ENCODE measurements at regions of chr2 and their contacts with region 1.

Region 1: DNA sequence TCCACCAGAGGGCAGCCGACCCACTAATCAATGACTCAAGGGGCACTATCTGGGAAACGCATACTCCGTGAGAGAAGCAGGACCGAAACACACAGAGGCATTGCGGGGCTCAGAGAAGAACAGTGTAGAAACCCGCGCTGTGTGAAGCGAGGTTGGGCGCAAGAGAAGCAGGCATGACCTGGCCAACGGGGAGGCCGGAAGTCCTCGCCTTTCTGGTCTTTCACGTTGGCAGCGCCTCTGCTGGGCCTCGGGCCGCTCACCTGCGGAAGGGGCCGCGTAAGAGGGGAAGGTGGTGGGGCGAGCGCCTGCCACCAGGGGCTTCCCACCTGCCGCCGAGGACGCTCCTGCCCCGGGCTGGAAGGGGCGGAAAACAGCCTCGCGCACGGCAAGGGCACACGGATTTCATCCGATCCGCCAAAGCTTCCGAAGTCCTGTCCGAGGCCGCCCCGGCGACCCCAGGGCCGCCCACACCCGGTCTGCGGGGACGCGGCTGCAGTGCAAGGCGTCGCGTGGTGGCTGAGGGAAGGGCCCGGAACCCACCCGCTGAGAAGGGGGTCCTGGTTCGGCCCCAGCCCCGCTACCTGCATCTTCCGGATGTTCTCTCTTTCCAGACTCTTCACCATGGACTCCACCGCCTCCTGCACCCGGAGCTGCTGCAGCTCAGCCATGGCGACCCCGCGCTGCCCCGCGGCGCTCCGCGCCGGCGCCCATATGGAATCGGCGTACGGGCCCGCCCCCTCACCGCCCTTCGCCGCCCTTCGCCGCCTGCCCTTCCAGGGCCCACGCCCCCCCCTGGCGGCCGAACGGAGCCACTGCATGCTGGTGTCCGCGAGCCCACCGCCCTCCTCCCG is at the start of gene FAM136A:
- DNase-seq: peak; percentile 96
- H3K4me3 ChIP-seq: peak within 1 kb of the TSS; percentile 82 to 97
- H3K27ac ChIP-seq: peak within 1 kb of the TSS; percentile 53 to 85
- H3K4me1 ChIP-seq: peaks cover 6 to 9% of the 10 kb centered on the region in 2 experiments; a peak in 1 of 4 replicates
- H3K27me3 ChIP-seq: no peaks in the 10 kb centered on the region
- CTCF ChIP-seq: peak; percentile 80
- EP300 ChIP-seq: 0 out of 4 replicates have a peak, but pooled peaks of 1 of the 2 experiments have one; percentile 30
- RAD21 ChIP-seq: peak; percentile 46; the same call in 1 of the 2 replicates
- polyA plus RNA-seq, gene FAM136A: 43.3 and 50.6 TPM in 2 replicates

Region 2: GRCh38 chr2:70258532-70258874 is 43.1 kb before region 1 on chr2:
- CTCF ChIA-PET with region 1: interaction called, 3 read pairs
- POLR2A ChIA-PET with region 1: interaction called, 10 read pairs
- DNase-seq: peak; percentile 56
- H3K4me3 ChIP-seq: peak overlapping the region; percentile 69 to 79
- H3K27ac ChIP-seq: peak overlapping the region; percentile 7 to 84; a peak in 3 of 4 replicates
- H3K4me1 ChIP-seq: peaks cover 0 to 8% of the 10 kb centered on the region in 2 experiments; a peak in 2 of 4 replicates
- H3K27me3 ChIP-seq: no peaks in the 10 kb centered on the region
- CTCF ChIP-seq: no peak
- EP300 ChIP-seq: no peak
- RAD21 ChIP-seq: no peak

Region 3: GRCh38 chr2:70340921-70341765 is 39.6 kb after region 1 on chr2:
- CTCF ChIA-PET with region 1: interaction called, 74 read pairs
- POLR2A ChIA-PET with region 1: no interaction called
- DNase-seq: peak; percentile 76
- H3K4me3 ChIP-seq: no peak overlapping the region; a peak in 1 of 4 replicates
- H3K27ac ChIP-seq: no peak overlapping the region
- H3K4me1 ChIP-seq: no peaks in the 10 kb centered on the region
- H3K27me3 ChIP-seq: peaks cover 13% of the 10 kb centered on the region; the same call in 1 of the 2 replicates
- CTCF ChIP-seq: peak; percentile 81
- EP300 ChIP-seq: no peak
- RAD21 ChIP-seq: peak; percentile 93

Region 4: GRCh38 chr2:70641263-70641784 is 339.8 kb after region 1 on chr2:
- CTCF ChIA-PET with region 1: interaction called, 111 read pairs
- POLR2A ChIA-PET with region 1: no interaction called
- DNase-seq: no peak
- H3K4me3 ChIP-seq: no peak overlapping the region
- H3K27ac ChIP-seq: no peak overlapping the region
- H3K4me1 ChIP-seq: no peaks in the 10 kb centered on the region
- H3K27me3 ChIP-seq: no peaks in the 10 kb centered on the region
- CTCF ChIP-seq: no peak
- EP300 ChIP-seq: no peak
- RAD21 ChIP-seq: no peak

Region 5: GRCh38 chr2:70767699-70768589 is 466.4 kb after region 1 on chr2 and contains the start of gene ADD2:
- CTCF ChIA-PET with region 1: interaction called, 25 read pairs
- POLR2A ChIA-PET with region 1: no interaction called
- DNase-seq: peak; percentile 93
- H3K4me3 ChIP-seq: peak within 1 kb of the TSS; percentile 50 to 52
- H3K27ac ChIP-seq: peak within 1 kb of the TSS in 1 of 2 experiments; percentile 73; a peak in 2 of 4 replicates
- H3K4me1 ChIP-seq: peaks cover 0 to 10% of the 10 kb centered on the region in 2 experiments; a peak in 2 of 4 replicates
- H3K27me3 ChIP-seq: peaks cover 25% of the 10 kb centered on the region
- CTCF ChIP-seq: peak; percentile 38
- EP300 ChIP-seq: no peak
- RAD21 ChIP-seq: no peak
- polyA plus RNA-seq, gene ADD2: 0.30 and 0.50 TPM in 2 replicates

Region 6: DNA sequence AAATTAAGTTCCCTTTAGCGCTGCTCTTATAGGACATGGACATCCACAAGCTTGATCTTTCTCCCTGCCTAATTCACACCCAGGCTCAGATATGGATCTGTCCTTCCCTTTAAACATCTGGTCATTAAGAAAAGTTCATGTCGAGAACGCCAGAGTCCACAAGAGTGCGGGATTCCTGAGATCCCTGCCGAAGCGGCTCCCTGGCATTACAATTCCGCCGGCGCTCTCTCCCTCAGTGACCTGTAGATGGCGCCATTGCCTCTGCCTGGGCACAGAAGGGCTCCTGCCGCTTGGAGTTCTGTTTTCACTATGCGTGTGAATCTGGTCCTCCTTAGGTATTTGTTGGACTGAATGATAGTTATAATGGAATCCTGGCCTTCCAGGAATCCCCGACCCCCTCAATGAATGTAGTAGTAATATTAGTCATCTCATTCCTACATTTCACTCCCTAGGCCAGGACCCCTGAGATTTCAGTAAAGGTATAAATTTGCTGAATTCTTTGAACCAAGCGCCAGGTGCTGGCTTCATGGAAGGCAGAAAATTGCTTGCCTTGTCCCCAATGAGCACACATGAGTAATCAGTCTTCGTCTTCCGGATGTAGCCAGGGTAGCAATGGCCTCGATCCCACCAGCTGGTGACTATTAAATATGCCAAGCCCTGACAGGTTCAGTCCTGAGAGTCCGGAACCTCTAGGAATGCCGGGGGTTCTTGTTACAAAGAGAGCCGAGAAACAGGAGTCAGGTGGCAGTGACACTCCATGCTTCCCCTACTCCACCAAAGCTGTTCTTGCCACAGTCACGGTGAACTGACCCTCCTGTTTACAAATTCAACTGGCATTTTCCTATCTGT is 560.4 kb after region 1 on chr2:
- CTCF ChIA-PET with region 1: interaction called, 13 read pairs
- POLR2A ChIA-PET with region 1: no interaction called
- DNase-seq: peak; percentile 85
- H3K4me3 ChIP-seq: peak overlapping the region in 1 of 2 experiments; percentile 30; a peak in 1 of 4 replicates
- H3K27ac ChIP-seq: no peak overlapping the region
- H3K4me1 ChIP-seq: peaks cover 0 to 3% of the 10 kb centered on the region in 2 experiments; a peak in 1 of 4 replicates
- H3K27me3 ChIP-seq: 0 out of 2 replicates have a peak, but pooled peaks cover 8% of the 10 kb centered on the region
- CTCF ChIP-seq: peak; percentile 99
- EP300 ChIP-seq: no peak
- RAD21 ChIP-seq: peak; percentile 93

Measured in SK-N-SH (cell line).